Activated naive CD4-positive, alpha-beta T cell treated with anti-CD3 and anti-CD28 coated beads, Interleukin-2, amount 10 ng/mL, durations not matched to agents 7 days and 5 days (primary cell): ENCODE measurements at regions of chr1 and their contacts with region 1.

Region 1: GRCh38 chr1:180482425-180483275 is 19.7 kb downstream of the ACBD6 start:
- DNase-seq: no peak
- H3K4me3 Mint-ChIP-seq: no peak overlapping the region
- H3K27ac Mint-ChIP-seq: no peak overlapping the region
- H3K4me1 Mint-ChIP-seq: peaks cover 10% of the 10 kb centered on the region
- H3K27me3 Mint-ChIP-seq: no peaks in the 10 kb centered on the region

Region 2: GRCh38 chr1:180252638-180253536 is 229.8 kb before region 1 on chr1:
- CTCF ChIA-PET with region 1: interaction called, 21 read pairs
- DNase-seq: peak; percentile 84
- H3K4me3 Mint-ChIP-seq: no peak overlapping the region
- H3K27ac Mint-ChIP-seq: no peak overlapping the region
- H3K4me1 Mint-ChIP-seq: peaks cover 5% of the 10 kb centered on the region
- H3K27me3 Mint-ChIP-seq: peaks cover 55% of the 10 kb centered on the region

Region 3: GRCh38 chr1:180451504-180451903 is 31.1 kb before region 1 on chr1:
- CTCF ChIA-PET with region 1: no interaction called
- DNase-seq: no peak
- H3K4me3 Mint-ChIP-seq: no peak overlapping the region
- H3K27ac Mint-ChIP-seq: no peak overlapping the region
- H3K4me1 Mint-ChIP-seq: no peaks in the 10 kb centered on the region
- H3K27me3 Mint-ChIP-seq: no peaks in the 10 kb centered on the region

Region 4: GRCh38 chr1:180502360-180503273 is 20.0 kb after region 1 on chr1 and contains the start of gene ACBD6:
- CTCF ChIA-PET with region 1: interaction called, 28 read pairs
- DNase-seq: peak; percentile 89
- H3K4me3 Mint-ChIP-seq: peak within 1 kb of the TSS; percentile 93
- H3K27ac Mint-ChIP-seq: peak within 1 kb of the TSS; percentile 96
- H3K4me1 Mint-ChIP-seq: peaks cover 38% of the 10 kb centered on the region
- H3K27me3 Mint-ChIP-seq: no peaks in the 10 kb centered on the region

Region 5: GRCh38 chr1:180643693-180644092 is 161.0 kb after region 1 on chr1:
- CTCF ChIA-PET with region 1: no interaction called
- DNase-seq: no peak
- H3K4me3 Mint-ChIP-seq: no peak overlapping the region
- H3K27ac Mint-ChIP-seq: no peak overlapping the region
- H3K4me1 Mint-ChIP-seq: no peaks in the 10 kb centered on the region
- H3K27me3 Mint-ChIP-seq: no peaks in the 10 kb centered on the region